Endothelial cell of umbilical vein (primary cell): ENCODE measurements at regions of chr7 and their contacts with region 1.

Region 1: GRCh38 chr7:26061688-26062150 is 90.3 kb upstream of the NFE2L3 start:
- DNase-seq: peak; percentile 49
- H3K4me3 ChIP-seq: no peak overlapping the region
- H3K27ac ChIP-seq: no peak overlapping the region
- H3K4me1 ChIP-seq: no peaks in the 10 kb centered on the region
- H3K27me3 ChIP-seq: peaks cover 8 to 11% of the 10 kb centered on the region in 2 experiments
- CTCF ChIP-seq: peak; percentile 78 to 86
- POLR2A ChIP-seq: no peak

Region 2: DNA sequence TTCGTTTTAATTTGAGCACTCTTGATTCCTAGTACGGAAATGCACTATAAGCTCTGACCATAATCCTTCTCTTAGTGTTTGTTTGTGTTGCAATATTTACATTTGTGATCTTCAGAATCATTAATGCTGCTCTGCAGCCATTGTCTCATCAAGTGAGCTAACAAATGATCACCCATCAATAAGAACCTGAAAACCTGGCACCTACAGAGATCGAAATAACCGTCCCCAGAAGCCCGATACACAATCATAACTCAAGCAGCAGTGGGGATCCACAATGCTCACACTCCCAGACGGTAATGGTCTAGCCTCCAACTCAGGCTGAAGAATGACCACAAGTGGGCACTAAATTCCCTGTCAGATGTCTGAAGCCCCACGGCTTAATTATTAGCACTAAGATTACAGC is 65.7 kb before region 1 on chr7:
- CTCF ChIA-PET with region 1: no interaction called
- POLR2A ChIA-PET with region 1: no interaction called
- dilution Hi-C with region 1: no loop called
- intact Hi-C with region 1: loop called (anchors 5 kb)
- DNase-seq: no peak
- H3K4me3 ChIP-seq: no peak overlapping the region
- H3K27ac ChIP-seq: no peak overlapping the region
- H3K4me1 ChIP-seq: no peaks in the 10 kb centered on the region
- H3K27me3 ChIP-seq: no peaks in the 10 kb centered on the region
- CTCF ChIP-seq: no peak
- POLR2A ChIP-seq: no peak